Lower leg skin (tissue), 4 donors: ENCODE measurements at regions of chr22 and their contacts with region 1.

Region 1: DNA sequence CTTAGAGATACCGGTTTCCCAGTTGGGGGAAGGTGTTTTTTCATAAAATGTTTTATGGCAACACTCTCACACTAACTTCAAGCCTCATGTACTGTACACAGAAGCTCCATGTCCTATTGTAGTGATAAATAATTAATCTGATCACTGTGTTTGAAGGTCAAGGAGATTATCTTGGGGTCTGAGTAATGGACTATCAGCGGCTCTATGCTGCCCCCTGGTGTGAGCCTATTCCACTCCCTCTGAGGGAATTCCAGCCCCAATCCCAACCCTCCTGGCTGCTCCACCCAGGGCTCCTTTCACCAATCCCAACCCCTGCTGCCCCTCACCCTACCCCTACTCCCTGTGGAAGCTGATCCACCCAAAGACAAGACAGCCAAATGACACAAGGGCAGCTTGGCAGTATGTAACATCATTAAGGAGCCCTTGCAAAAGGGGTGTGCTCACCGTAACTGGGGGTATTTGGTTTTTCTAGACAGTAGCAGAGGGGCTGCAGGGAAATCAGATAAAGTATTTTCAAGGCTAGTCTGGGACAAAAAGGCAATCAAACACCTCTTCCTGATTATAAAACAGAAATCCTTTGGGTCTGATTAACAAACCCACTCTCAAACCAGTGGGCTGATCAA is 22.3 kb downstream of the HPS4 start:
- DNase-seq: peak in 1 of 2 donors; percentile 87
- H3K4me3 ChIP-seq: no peak overlapping the region
- CTCF ChIP-seq: no peak
- POLR2A ChIP-seq: no peak

Region 2: DNA sequence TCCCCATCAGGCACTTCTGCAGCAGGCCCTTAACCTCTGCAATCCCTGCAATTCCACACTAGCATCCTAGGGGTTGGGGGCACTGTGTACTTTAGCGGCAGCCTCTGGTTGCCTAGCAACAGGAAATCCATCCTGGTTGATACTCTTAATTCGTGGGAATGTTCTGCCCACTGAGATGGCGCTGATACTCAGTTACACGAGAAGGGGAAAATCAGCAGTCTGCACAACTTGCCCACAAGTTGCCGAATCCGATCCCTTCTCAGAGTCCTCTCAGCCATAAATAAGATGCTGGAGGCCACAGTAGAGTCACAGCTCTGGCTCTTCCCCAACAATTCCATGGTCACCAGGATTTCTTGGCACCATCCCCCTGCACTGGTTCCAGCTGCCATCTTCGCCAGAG is 1319.2 kb before region 1 on chr22:
- intact Hi-C with region 1: loop called (anchors 5 kb)
- DNase-seq: no peak
- H3K4me3 ChIP-seq: no peak overlapping the region
- CTCF ChIP-seq: no peak
- POLR2A ChIP-seq: no peak

Region 3: GRCh38 chr22:26398741-26399153 is 62.6 kb before region 1 on chr22:
- intact Hi-C with region 1: loop called (anchors 10 kb)
- DNase-seq: peak; percentile 58 to 86
- H3K4me3 ChIP-seq: no peak overlapping the region
- CTCF ChIP-seq: no peak
- POLR2A ChIP-seq: no peak